Endothelial cell of umbilical vein (primary cell): ENCODE measurements at regions of chr11 and their contacts with region 1.

Region 1: DNA sequence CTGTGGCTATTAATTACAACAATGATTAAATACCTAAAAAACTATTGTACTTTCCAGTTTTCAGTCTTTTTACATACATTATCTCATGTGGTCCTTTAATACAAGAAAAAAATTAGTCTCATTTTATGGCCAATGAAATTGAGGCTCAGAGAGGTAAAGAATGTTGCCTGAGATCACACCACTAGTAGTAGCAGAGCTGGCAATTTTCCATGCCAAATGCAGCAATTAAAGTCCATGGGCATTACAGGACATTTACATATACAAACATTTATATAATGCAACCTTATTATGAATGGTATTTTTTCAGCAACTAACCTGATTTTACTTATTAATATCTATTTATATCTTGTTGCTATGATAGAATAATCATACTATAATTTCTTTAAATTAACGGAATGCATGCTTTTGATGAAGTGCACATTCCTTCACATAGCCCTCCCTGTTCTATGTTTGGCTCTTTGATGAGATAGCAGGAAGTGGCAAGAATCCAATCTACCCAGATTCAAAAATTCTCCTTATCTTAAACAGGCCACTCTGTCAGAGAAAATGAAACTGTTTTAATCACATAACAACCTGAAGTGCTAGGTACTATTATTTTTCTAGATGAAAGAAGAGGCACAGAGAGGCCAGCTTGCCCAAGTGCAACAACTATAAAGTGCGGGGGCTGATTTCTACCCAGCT is 120.9 kb upstream of the LDLRAD3 start:
- DNase-seq: no peak
- H3K4me3 ChIP-seq: no peak overlapping the region
- H3K27ac ChIP-seq: no peak overlapping the region
- H3K4me1 ChIP-seq: peaks cover 8% of the 10 kb centered on the region
- H3K27me3 ChIP-seq: no peaks in the 10 kb centered on the region
- CTCF ChIP-seq: no peak
- POLR2A ChIP-seq: no peak

Region 2: GRCh38 chr11:35689081-35689996 is 133.6 kb before region 1 on chr11:
- CTCF ChIA-PET with region 1: interaction called, 18 read pairs
- POLR2A ChIA-PET with region 1: no interaction called
- dilution Hi-C with region 1: no loop called
- intact Hi-C with region 1: no loop called
- DNase-seq: no peak
- H3K4me3 ChIP-seq: no peak overlapping the region
- H3K27ac ChIP-seq: no peak overlapping the region
- H3K4me1 ChIP-seq: peaks cover 15% of the 10 kb centered on the region
- H3K27me3 ChIP-seq: no peaks in the 10 kb centered on the region
- CTCF ChIP-seq: no peak
- POLR2A ChIP-seq: no peak

Region 3: GRCh38 chr11:35800970-35801953 is 21.7 kb before region 1 on chr11:
- CTCF ChIA-PET with region 1: interaction called, 141 read pairs
- POLR2A ChIA-PET with region 1: interaction called, 6 read pairs
- dilution Hi-C with region 1: no loop called
- intact Hi-C with region 1: no loop called
- DNase-seq: peak; percentile 56
- H3K4me3 ChIP-seq: no peak overlapping the region
- H3K27ac ChIP-seq: no peak overlapping the region
- H3K4me1 ChIP-seq: peaks cover 29% of the 10 kb centered on the region
- H3K27me3 ChIP-seq: no peaks in the 10 kb centered on the region
- CTCF ChIP-seq: no peak
- POLR2A ChIP-seq: no peak

Region 4: DNA sequence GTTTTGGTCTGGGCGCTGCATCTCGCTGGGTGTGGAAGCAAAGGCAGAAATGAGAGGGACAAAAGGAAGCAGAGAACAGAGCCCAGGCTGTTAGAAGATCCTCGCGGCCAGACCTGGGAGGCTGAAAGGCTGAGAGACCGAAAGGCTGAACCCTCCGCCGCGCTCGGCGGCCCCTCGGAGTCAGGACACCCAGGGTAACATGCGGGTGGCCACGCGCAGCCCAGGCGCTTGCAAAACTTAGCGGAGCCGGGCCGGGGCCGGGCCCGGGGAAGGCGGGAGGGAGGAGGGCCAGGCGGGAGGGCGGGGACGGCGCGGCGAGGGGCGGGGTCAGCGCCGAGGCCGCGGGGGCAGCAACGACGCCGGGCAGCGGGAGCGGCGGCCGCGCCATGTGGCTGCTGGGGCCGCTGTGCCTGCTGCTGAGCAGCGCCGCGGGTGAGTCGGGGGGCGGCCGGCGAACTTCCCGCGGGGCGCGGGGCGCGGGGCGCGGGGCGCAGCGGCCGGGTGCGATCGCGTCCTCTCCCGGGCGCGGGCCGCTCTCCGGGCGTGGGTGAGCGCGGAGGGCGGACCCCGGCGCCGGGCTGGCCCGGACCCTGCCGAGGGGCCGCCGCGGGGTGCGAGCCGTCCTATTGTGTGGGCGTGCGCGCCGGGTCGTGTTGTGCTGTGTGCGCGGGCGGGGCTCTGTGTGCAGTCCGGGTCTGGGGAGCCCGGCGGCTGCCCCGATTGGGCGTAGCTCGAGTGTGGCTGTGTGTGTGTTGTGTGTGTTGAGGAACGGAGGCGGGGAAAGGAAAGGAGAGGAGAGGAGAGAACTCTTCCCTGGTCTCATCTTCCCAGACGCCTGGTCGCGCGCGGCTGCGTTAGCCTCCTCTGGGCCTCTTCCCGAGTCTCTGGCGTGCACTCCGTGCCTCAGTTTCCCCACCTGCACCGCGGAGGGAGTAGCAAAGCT is 121.0 kb after region 1 on chr11 and contains the start of gene LDLRAD3:
- CTCF ChIA-PET with region 1: interaction called, 47 read pairs
- POLR2A ChIA-PET with region 1: interaction called, 4 read pairs
- dilution Hi-C with region 1: no loop called
- intact Hi-C with region 1: loop called (anchors 2 kb)
- DNase-seq: peak; percentile 72
- H3K4me3 ChIP-seq: peak within 1 kb of the TSS; percentile 62 to 82 (median 77)
- H3K27ac ChIP-seq: peak within 1 kb of the TSS; percentile 45
- H3K4me1 ChIP-seq: peaks cover 18% of the 10 kb centered on the region
- H3K27me3 ChIP-seq: no peaks in the 10 kb centered on the region
- CTCF ChIP-seq: no peak
- POLR2A ChIP-seq: peak; percentile 54
- total RNA-seq, gene LDLRAD3: 19.9 and 25.1 TPM in 2 replicates

Region 5: GRCh38 chr11:36034551-36035331 is 211.8 kb after region 1 on chr11:
- CTCF ChIA-PET with region 1: interaction called, 41 read pairs
- POLR2A ChIA-PET with region 1: no interaction called
- dilution Hi-C with region 1: no loop called
- intact Hi-C with region 1: no loop called
- DNase-seq: peak; percentile 17
- H3K4me3 ChIP-seq: no peak overlapping the region
- H3K27ac ChIP-seq: no peak overlapping the region
- H3K4me1 ChIP-seq: peaks cover 11% of the 10 kb centered on the region
- H3K27me3 ChIP-seq: no peaks in the 10 kb centered on the region
- CTCF ChIP-seq: no peak
- POLR2A ChIP-seq: no peak

Region 6: GRCh38 chr11:36131721-36132397 is 308.9 kb after region 1 on chr11:
- CTCF ChIA-PET with region 1: interaction called, 205 read pairs
- POLR2A ChIA-PET with region 1: interaction called, 5 read pairs
- dilution Hi-C with region 1: no loop called
- intact Hi-C with region 1: loop called (anchors 1 kb)
- DNase-seq: peak; percentile 71
- H3K4me3 ChIP-seq: no peak overlapping the region
- H3K27ac ChIP-seq: no peak overlapping the region
- H3K4me1 ChIP-seq: peaks cover 9% of the 10 kb centered on the region
- H3K27me3 ChIP-seq: no peaks in the 10 kb centered on the region
- CTCF ChIP-seq: peak; percentile 65 to 80
- POLR2A ChIP-seq: no peak